ENCODE measurements at regions of chr7 and their contacts with region 1.

Region 1: DNA sequence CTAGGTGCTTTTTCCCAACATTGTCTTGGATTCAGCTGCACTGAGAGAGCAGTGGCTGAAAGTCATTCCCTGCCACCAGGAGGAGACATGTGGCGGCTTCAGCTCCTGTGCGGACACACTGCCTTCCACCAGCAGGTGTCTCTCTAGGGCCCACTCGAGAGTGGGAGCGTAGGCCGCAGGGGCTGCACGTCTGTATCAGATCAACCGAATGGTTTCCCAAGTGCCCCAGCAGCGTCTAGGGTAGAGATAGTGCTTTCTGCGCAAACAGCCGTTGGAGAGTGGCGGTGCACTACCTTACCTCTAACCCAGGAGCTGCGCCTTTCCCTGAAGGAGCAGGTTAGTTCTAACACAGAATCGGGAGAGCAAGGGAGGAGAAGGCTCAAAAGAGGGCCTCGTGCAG is 31.7 kb downstream of the PAPOLB start:
- DNase-seq: peak; percentile 64
- ATAC-seq: peak; percentile 95
- H3K4me3 ChIP-seq: no peak overlapping the region
- H3K27ac ChIP-seq: no peak overlapping the region
- H3K4me1 ChIP-seq: no peaks in the 10 kb centered on the region
- H3K27me3 ChIP-seq: no peaks in the 10 kb centered on the region
- CTCF ChIP-seq: peak; percentile 100

Region 2: DNA sequence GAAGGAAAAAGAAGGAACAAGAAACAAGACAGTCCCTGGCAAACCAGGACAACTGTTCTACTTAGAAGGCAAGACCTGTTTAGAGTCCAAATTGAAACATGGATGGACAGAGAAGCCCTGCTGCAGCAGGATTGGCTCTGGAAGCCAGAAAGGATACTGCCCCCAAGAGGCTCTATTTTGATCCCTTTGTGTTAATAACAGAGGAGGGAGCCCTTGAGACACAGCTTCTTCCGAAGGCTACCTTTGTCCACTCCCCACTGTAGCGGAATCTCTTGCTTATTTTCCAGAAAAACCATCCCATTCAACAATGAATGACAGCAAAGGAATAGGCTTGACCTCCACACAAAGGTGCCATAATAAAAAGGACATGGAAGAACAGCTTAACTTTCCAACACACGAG is 268.4 kb before region 1 on chr7:
- CTCF ChIA-PET with region 1: no interaction called
- POLR2A ChIA-PET with region 1: no interaction called
- in situ Hi-C with region 1: no loop called
- intact Hi-C with region 1: loop called (anchors 5 kb)
- DNase-seq: no peak
- ATAC-seq: 0 out of 2 replicates have a peak, but pooled peaks have one; percentile 49
- H3K4me3 ChIP-seq: no peak overlapping the region
- H3K27ac ChIP-seq: no peak overlapping the region
- H3K4me1 ChIP-seq: no peaks in the 10 kb centered on the region
- H3K27me3 ChIP-seq: peaks cover 13% of the 10 kb centered on the region; the same call in 1 of the 2 replicates
- CTCF ChIP-seq: peak; percentile 55

Region 3: GRCh38 chr7:4727914-4728705 is 102.1 kb before region 1 on chr7:
- CTCF ChIA-PET with region 1: interaction called, 10 read pairs
- POLR2A ChIA-PET with region 1: no interaction called
- in situ Hi-C with region 1: no loop called
- intact Hi-C with region 1: no loop called
- DNase-seq: no peak
- ATAC-seq: no peak
- H3K4me3 ChIP-seq: no peak overlapping the region
- H3K27ac ChIP-seq: no peak overlapping the region
- H3K4me1 ChIP-seq: peaks cover 13% of the 10 kb centered on the region
- H3K27me3 ChIP-seq: no peaks in the 10 kb centered on the region
- CTCF ChIP-seq: no peak

Region 4: DNA sequence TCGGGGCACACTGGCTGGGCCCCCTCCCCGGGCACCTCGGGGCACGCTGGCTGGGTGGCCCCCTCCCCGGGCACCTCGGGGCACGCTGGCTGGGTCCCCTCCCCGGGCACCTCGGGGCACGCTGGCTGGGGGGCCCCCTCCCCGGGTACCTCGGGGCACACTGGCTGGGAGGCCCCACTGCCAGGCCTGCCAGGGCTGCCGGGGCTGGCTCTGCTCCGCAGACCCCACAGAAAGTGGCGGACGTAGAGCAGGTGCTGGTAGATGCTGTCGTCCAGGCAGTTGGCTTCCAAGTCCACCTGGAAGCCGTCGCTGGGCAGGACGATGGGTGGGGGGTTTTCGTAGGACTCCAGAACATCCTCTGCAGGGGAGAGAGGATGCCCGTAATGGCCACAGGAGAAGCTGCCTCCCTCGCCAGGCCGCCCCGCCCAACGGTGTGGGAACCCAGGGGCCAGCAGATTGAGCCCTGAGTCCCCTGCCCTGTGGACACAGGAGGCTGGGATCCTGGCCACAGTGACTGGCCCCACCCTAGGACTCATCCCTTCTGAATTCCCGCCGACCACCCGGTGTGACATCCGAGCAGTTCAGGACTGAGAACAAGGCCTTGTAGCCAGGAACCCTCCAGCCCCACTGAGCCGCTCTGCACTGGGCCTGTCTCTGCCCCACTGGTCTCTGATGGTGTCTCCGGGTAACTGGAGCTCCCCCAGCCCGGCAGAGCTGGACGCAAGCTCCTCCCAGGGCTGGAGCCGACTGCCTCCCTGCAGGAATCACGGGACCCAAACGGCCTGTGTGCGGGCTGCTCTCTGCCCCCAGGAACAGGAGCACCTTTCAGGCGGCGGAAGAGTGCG is 26.6 kb before region 1 on chr7:
- CTCF ChIA-PET with region 1: no interaction called
- POLR2A ChIA-PET with region 1: no interaction called
- in situ Hi-C with region 1: no loop called
- intact Hi-C with region 1: no loop called
- DNase-seq: no peak
- ATAC-seq: peak; percentile 62
- H3K4me3 ChIP-seq: no peak overlapping the region
- H3K27ac ChIP-seq: no peak overlapping the region
- H3K4me1 ChIP-seq: peaks cover 22% of the 10 kb centered on the region
- H3K27me3 ChIP-seq: no peaks in the 10 kb centered on the region
- CTCF ChIP-seq: no peak

Region 5: GRCh38 chr7:4973728-4974198 is 143.6 kb after region 1 on chr7:
- CTCF ChIA-PET with region 1: interaction called, 3 read pairs
- POLR2A ChIA-PET with region 1: no interaction called
- in situ Hi-C with region 1: no loop called
- intact Hi-C with region 1: loop called (anchors 5 kb)
- DNase-seq: peak; percentile 74
- ATAC-seq: peak; percentile 98
- H3K4me3 ChIP-seq: peak overlapping the region; percentile 72 to 73
- H3K27ac ChIP-seq: peak overlapping the region; percentile 70; the same call in 1 of the 2 replicates
- H3K4me1 ChIP-seq: no peaks in the 10 kb centered on the region
- H3K27me3 ChIP-seq: no peaks in the 10 kb centered on the region
- CTCF ChIP-seq: peak; percentile 95

Region 6: DNA sequence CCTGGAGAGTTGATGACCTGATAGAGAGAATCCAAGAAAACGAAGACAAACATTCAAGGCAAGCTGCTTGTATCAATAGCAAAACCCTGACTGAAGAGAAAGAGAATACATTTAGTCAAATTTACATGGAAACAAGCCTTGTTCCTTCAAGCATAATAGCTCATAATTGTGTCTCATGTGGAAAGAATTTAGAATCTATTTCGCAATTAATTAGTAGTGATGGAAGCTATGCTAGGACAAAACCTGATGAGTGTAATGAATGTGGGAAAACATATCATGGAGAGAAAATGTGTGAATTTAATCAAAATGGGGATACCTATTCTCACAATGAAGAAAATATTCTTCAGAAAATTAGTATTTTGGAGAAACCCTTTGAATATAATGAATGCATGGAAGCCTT is 233.5 kb after region 1 on chr7:
- CTCF ChIA-PET with region 1: interaction called, 12 read pairs
- POLR2A ChIA-PET with region 1: no interaction called
- in situ Hi-C with region 1: no loop called
- intact Hi-C with region 1: no loop called
- DNase-seq: no peak
- ATAC-seq: no peak
- H3K4me3 ChIP-seq: no peak overlapping the region
- H3K27ac ChIP-seq: no peak overlapping the region
- H3K4me1 ChIP-seq: no peaks in the 10 kb centered on the region
- H3K27me3 ChIP-seq: no peaks in the 10 kb centered on the region
- CTCF ChIP-seq: no peak

Region 7: DNA sequence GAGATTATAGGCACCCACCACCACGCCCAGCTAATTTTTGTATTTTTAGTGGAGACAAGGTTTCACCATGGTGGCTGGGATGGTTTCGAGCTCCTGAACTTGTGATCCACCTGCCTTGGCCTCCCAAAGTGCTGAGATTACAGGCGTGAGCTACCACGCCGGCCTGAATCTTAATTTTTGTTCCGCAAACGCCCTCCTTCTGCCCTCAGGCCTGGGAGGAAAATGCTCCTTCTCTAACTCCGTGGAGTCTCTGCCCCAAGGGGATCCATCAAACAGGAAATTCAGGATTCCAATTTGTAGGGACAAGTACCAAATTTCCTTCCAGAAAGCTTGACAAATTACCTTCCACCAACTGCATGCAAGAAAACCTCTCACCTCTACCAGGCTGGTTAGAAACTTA is 258.7 kb after region 1 on chr7:
- CTCF ChIA-PET with region 1: interaction called, 9 read pairs
- POLR2A ChIA-PET with region 1: no interaction called
- in situ Hi-C with region 1: no loop called
- intact Hi-C with region 1: loop called (anchors 1 kb)
- DNase-seq: no peak
- ATAC-seq: no peak
- H3K4me3 ChIP-seq: no peak overlapping the region
- H3K27ac ChIP-seq: no peak overlapping the region
- H3K4me1 ChIP-seq: no peaks in the 10 kb centered on the region
- H3K27me3 ChIP-seq: peaks cover 3% of the 10 kb centered on the region; the same call in 1 of the 2 replicates
- CTCF ChIP-seq: no peak